Activated CD4-positive, alpha-beta memory T cell treated with anti-CD3 and anti-CD28 coated beads, Interleukin-2, amount 10 ng/mL, durations not matched to agents 7 days and 5 days (primary cell): ENCODE measurements at regions of chr2 and their contacts with region 1.

Region 1: GRCh38 chr2:170928824-170929685 is at the start of gene GORASP2:
- DNase-seq: peak; percentile 98
- H3K4me3 Mint-ChIP-seq: peak within 1 kb of the TSS; percentile 91
- H3K27ac Mint-ChIP-seq: peak within 1 kb of the TSS; percentile 93
- H3K4me1 Mint-ChIP-seq: peaks cover 45% of the 10 kb centered on the region
- H3K27me3 Mint-ChIP-seq: no peaks in the 10 kb centered on the region
- total RNA-seq, gene GORASP2: 58.7 to 67.0 TPM

Region 2: GRCh38 chr2:170873035-170873692 is 55.9 kb before region 1 on chr2:
- CTCF ChIA-PET with region 1: interaction called, 15 read pairs
- POLR2A ChIA-PET with region 1: interaction called, 4 read pairs
- DNase-seq: peak; percentile 80
- H3K4me3 Mint-ChIP-seq: peak overlapping the region; percentile 51
- H3K27ac Mint-ChIP-seq: peak overlapping the region; percentile 11
- H3K4me1 Mint-ChIP-seq: peaks cover 12% of the 10 kb centered on the region
- H3K27me3 Mint-ChIP-seq: peaks cover 10% of the 10 kb centered on the region

Region 3: GRCh38 chr2:170950221-170950761 is 21.2 kb after region 1 on chr2:
- CTCF ChIA-PET with region 1: interaction called, 20 read pairs
- POLR2A ChIA-PET with region 1: interaction called, 14 read pairs
- DNase-seq: no peak
- H3K4me3 Mint-ChIP-seq: no peak overlapping the region
- H3K27ac Mint-ChIP-seq: no peak overlapping the region
- H3K4me1 Mint-ChIP-seq: peaks cover 2% of the 10 kb centered on the region
- H3K27me3 Mint-ChIP-seq: no peaks in the 10 kb centered on the region

Region 4: DNA sequence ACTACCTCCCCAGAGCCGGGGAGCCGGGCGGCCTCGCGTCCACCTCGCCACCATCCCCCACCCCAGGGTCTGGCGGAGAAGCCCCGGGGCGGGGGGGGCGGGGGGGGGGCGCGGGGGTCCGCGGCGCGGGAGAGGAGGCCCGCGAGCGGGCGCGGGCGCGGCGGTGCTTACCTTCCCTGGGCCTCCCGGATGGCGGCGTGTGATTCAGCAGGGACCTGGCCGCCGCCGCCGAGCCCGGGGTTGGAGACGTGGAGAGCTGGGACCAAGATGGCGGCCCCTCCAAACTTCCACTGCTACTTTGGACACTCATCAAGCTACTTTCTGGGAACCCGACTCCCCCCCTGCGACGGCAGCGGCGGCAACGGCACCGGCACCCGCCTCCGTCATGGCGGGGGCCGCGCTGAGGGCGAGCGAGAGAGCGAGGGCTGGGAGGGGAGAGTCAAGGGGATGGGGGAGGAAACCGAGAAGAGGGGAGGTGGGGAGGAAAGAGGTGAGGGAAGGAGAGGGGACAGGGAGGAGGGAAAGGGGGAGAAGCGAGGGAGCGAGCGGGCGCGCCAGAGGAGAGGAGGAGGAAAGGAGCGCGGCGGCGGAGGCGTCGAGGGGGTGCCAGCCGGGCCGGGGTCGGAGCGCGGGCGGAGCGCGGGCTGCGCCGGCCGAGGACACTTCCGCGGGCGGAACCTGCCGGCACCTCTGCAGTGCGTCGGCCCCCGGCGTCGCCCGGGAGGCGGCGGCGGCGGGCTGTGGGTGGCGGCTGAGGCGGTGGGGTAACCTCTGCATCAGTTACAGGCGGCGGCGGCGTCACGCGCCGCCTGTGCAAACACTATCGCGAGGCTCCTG is 231.3 kb after region 1 on chr2 and contains the start of gene TLK1:
- CTCF ChIA-PET with region 1: interaction called, 11 read pairs
- POLR2A ChIA-PET with region 1: interaction called, 34 read pairs
- DNase-seq: peak; percentile 77
- H3K4me3 Mint-ChIP-seq: peak within 1 kb of the TSS; percentile 94
- H3K27ac Mint-ChIP-seq: peak within 1 kb of the TSS; percentile 91
- H3K4me1 Mint-ChIP-seq: peaks cover 59% of the 10 kb centered on the region
- H3K27me3 Mint-ChIP-seq: no peaks in the 10 kb centered on the region
- total RNA-seq, gene TLK1: 74.9 to 79.5 TPM

Region 5: GRCh38 chr2:171433763-171434670 is 505.0 kb after region 1 on chr2 and contains the starts of genes DCAF17 and METTL8:
- CTCF ChIA-PET with region 1: interaction called, 16 read pairs
- POLR2A ChIA-PET with region 1: interaction called, 32 read pairs
- DNase-seq: peak; percentile 95
- H3K4me3 Mint-ChIP-seq: peak within 1 kb of the TSS; percentile 81
- H3K27ac Mint-ChIP-seq: peak within 1 kb of the TSS; percentile 96
- H3K4me1 Mint-ChIP-seq: peaks cover 33% of the 10 kb centered on the region
- H3K27me3 Mint-ChIP-seq: no peaks in the 10 kb centered on the region
- total RNA-seq, gene DCAF17: 12.8 to 14.8 TPM
- total RNA-seq, gene METTL8: 13.6 to 20.0 TPM